ENCODE measurements at regions of chr13 and their contacts with region 1.

Region 1: GRCh38 chr13:39655569-39656324 is at the start of gene COG6:
- DNase-seq: peak; percentile 92 to 93
- ATAC-seq: peak; percentile 93 to 99 (median 98)
- H3K4me3 ChIP-seq: peak within 1 kb of the TSS; percentile 92
- H3K27ac ChIP-seq: peak within 1 kb of the TSS; percentile 54
- H3K4me1 ChIP-seq: peaks cover 7% of the 10 kb centered on the region
- H3K27me3 ChIP-seq: no peaks in the 10 kb centered on the region
- CTCF ChIP-seq: no peak
- total RNA-seq, gene COG6: 7.5 to 26.4 (median 13.2) TPM

Region 2: GRCh38 chr13:38582133-38582532 is 1073.6 kb before region 1 on chr13:
- intact Hi-C with region 1: no loop called
- DNase-seq: no peak
- ATAC-seq: peak in 2 of 4 donors; percentile 43 to 48
- H3K4me3 ChIP-seq: no peak overlapping the region
- H3K27ac ChIP-seq: no peak overlapping the region
- H3K4me1 ChIP-seq: no peaks in the 10 kb centered on the region
- H3K27me3 ChIP-seq: no peaks in the 10 kb centered on the region
- CTCF ChIP-seq: peak; percentile 34

Region 3: DNA sequence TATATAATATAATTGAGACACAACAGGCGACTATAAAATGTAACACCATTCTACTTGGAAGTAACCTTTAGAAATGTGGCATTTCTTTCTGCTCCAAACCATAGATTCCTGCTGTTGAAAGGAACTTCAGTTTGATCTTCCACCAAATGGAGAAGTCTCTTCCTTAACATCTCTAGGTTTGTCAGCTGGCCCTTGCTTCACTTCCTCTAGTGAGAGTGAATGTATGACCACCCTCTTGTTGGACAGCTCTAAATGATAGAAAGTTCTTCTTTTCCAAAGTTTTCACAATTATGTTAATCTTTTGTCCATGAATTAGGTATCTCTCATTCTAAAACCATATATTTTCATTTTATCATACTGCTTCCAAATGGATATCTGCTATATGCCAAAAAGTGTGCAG is 14.1 kb before region 1 on chr13:
- intact Hi-C with region 1: loop called in 1 of 2 experiments (anchors 2 kb)
- DNase-seq: no peak
- ATAC-seq: no peak
- H3K4me3 ChIP-seq: no peak overlapping the region
- H3K27ac ChIP-seq: no peak overlapping the region
- H3K4me1 ChIP-seq: no peaks in the 10 kb centered on the region
- H3K27me3 ChIP-seq: peaks cover 0 to 4% (median 0%) of the 10 kb centered on the region in 3 donors
- CTCF ChIP-seq: no peak

Measured in psoas muscle (tissue), 8 donors.